ENCODE measurements at regions of chr1 and their contacts with region 1.

Region 1: DNA sequence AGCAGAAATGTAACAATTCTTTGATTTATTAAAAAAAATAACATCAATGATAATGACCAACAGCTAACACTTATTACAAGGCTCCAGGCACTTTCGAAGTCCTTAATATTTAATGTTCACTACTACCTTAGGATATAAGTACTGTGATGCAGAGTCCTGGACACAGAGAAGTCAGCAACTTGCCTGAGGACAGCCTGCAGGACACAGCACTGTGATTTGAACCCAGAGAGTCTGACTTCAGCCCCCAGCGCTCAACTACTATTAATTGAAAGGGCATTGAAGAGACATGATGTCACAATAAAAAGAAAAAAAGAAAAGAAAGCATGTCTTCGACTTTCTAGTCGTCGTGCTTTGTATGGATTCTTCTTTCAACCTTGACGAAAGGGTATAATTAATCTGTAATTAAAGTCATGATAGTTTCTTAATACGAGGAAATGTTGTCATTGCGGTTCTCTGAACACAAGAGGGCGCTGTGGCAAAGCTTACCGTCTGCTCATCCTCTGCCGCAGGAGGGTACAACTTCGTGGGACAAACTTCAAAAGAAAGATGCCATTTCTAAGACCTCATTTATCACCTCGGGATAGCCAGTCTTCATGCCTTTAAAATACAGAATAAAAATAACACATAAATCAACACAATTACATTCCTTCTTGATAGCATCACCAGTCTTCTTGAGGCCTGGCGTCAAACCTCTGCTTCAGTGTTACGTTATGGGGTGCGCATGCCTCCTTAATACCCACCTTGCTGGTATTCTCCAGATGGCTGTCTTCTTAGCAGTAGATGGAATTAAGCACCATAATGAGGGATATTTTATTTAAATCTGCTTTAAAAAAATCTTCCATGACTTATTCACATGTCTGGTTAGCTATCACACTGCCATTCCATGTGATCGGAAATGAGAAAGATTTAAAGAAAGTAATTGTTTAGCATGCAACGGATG is 240.1 kb downstream of the DISC1 start:
- DNase-seq: peak; percentile 49 to 70 (median 59)
- ATAC-seq: peak in 3 of 4 donors; percentile 35 to 45 (median 41)
- H3K4me3 ChIP-seq: no peak overlapping the region
- H3K27ac ChIP-seq: no peak overlapping the region
- H3K4me1 ChIP-seq: peaks cover 12 to 49% (median 36%) of the 10 kb centered on the region in 12 donors
- H3K27me3 ChIP-seq: no peaks in the 10 kb centered on the region
- CTCF ChIP-seq: peak; percentile 81 to 96 (median 90)
- POLR2A ChIP-seq: no peak

Region 2: DNA sequence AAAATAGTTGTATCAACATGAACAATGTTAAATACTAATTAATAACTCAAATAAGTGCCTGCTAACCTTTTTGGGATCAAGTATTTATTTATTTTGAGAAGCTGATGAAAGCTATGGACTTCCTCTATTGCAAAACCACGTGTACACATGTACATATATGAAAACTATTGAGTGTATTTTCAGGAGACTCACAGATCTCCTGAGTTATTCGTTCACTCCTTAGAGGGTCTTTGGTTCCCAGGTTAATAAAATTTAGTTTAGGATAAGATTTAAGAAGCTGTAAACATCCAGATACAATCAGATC is 109.6 kb before region 1 on chr1:
- intact Hi-C with region 1: loop called in 2 of 10 experiments (anchors 10 kb)
- DNase-seq: no peak
- ATAC-seq: peak in 2 of 4 donors; percentile 18 to 34
- H3K4me3 ChIP-seq: no peak overlapping the region
- H3K27ac ChIP-seq: no peak overlapping the region
- H3K4me1 ChIP-seq: peaks cover 0 to 8% (median 0%) of the 10 kb centered on the region in 12 donors
- H3K27me3 ChIP-seq: no peaks in the 10 kb centered on the region
- CTCF ChIP-seq: peak in 1 of 12 donors; percentile 11
- POLR2A ChIP-seq: no peak

Region 3: DNA sequence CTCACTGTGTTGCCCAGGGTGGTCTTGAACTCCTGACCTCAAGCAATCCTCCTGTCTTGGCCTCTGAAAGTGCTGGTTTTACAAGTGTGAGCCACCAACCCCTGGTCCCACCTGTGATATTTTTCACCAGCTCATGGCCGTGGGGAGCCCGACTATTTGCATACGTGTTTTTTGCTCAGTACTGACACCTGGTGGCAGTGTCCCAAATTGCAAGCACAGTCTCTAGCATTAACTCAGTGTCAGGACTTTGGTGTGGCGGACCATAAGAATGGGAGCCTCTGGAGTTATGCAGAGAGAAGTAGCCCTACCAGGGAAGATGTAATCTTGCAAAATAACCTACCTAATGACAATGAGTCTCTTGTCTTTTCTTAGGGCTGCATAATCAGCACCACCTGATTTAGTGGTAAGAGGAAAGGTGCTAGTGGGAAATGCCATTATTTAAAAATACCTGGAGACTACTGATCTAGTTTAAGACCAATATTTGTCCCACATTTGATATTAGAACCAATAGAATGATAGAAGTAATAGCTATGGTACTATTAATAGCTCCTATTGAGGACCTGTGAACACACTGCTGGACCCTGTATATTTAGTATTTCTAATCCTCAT is 65.3 kb after region 1 on chr1:
- intact Hi-C with region 1: loop called in 6 of 10 experiments (anchors 5 to 10 kb)
- DNase-seq: no peak
- ATAC-seq: no peak
- H3K4me3 ChIP-seq: no peak overlapping the region
- H3K27ac ChIP-seq: no peak overlapping the region
- H3K4me1 ChIP-seq: peaks cover 8 to 80% (median 61%) of the 10 kb centered on the region in 12 donors
- H3K27me3 ChIP-seq: no peaks in the 10 kb centered on the region
- CTCF ChIP-seq: peak; percentile 19 to 54 (median 36)
- POLR2A ChIP-seq: no peak

Region 4: GRCh38 chr1:232306269-232306961 is 439.8 kb after region 1 on chr1:
- intact Hi-C with region 1: loop called in 7 of 10 experiments (anchors 5 to 10 kb)
- DNase-seq: peak; percentile 46 to 71 (median 67)
- ATAC-seq: peak; percentile 67 to 96 (median 82)
- H3K4me3 ChIP-seq: no peak overlapping the region
- H3K27ac ChIP-seq: peak overlapping the region in 9 of 12 donors; percentile 2 to 71 (median 44)
- H3K4me1 ChIP-seq: peaks cover 0 to 27% (median 14%) of the 10 kb centered on the region in 12 donors
- H3K27me3 ChIP-seq: no peaks in the 10 kb centered on the region
- CTCF ChIP-seq: peak; percentile 10 to 66 (median 46)
- POLR2A ChIP-seq: no peak

Region 5: GRCh38 chr1:232403017-232403714 is 536.5 kb after region 1 on chr1:
- intact Hi-C with region 1: loop called in 4 of 10 experiments (anchors 10 kb)
- DNase-seq: peak in 3 of 5 donors; percentile 36 to 58 (median 39)
- ATAC-seq: peak; percentile 73 to 82 (median 80)
- H3K4me3 ChIP-seq: no peak overlapping the region
- H3K27ac ChIP-seq: peak overlapping the region in 4 of 12 donors; percentile 25 to 69 (median 44)
- H3K4me1 ChIP-seq: peaks cover 0 to 33% (median 5%) of the 10 kb centered on the region in 12 donors
- H3K27me3 ChIP-seq: no peaks in the 10 kb centered on the region
- CTCF ChIP-seq: peak in 4 of 12 donors; percentile 16 to 37 (median 22)
- POLR2A ChIP-seq: no peak

Region 6: GRCh38 chr1:232435729-232436128 is 569.1 kb after region 1 on chr1:
- intact Hi-C with region 1: loop called in 1 of 10 experiments (anchors 10 kb)
- DNase-seq: peak in 2 of 5 donors; percentile 54
- ATAC-seq: peak; percentile 15 to 47 (median 27)
- H3K4me3 ChIP-seq: no peak overlapping the region
- H3K27ac ChIP-seq: peak overlapping the region in 5 of 12 donors; percentile 1 to 18 (median 7)
- H3K4me1 ChIP-seq: peaks cover 3 to 46% (median 17%) of the 10 kb centered on the region in 12 donors
- H3K27me3 ChIP-seq: no peaks in the 10 kb centered on the region
- CTCF ChIP-seq: no peak
- POLR2A ChIP-seq: no peak

Measured in heart left ventricle (tissue), 16 donors.